ENCODE measurements at regions of chr12 and their contacts with region 1.

Region 1: GRCh38 chr12:116880817-116881324 is 370 bp downstream of the HRK start:
- DNase-seq: peak; percentile 93
- H3K4me3 ChIP-seq: peak overlapping the region; percentile 76
- H3K27ac ChIP-seq: peak overlapping the region; percentile 57
- H3K4me1 ChIP-seq: peaks cover 46% of the 10 kb centered on the region
- CTCF ChIP-seq: peak; percentile 49; the same call in 1 of the 2 replicates

Region 2: DNA sequence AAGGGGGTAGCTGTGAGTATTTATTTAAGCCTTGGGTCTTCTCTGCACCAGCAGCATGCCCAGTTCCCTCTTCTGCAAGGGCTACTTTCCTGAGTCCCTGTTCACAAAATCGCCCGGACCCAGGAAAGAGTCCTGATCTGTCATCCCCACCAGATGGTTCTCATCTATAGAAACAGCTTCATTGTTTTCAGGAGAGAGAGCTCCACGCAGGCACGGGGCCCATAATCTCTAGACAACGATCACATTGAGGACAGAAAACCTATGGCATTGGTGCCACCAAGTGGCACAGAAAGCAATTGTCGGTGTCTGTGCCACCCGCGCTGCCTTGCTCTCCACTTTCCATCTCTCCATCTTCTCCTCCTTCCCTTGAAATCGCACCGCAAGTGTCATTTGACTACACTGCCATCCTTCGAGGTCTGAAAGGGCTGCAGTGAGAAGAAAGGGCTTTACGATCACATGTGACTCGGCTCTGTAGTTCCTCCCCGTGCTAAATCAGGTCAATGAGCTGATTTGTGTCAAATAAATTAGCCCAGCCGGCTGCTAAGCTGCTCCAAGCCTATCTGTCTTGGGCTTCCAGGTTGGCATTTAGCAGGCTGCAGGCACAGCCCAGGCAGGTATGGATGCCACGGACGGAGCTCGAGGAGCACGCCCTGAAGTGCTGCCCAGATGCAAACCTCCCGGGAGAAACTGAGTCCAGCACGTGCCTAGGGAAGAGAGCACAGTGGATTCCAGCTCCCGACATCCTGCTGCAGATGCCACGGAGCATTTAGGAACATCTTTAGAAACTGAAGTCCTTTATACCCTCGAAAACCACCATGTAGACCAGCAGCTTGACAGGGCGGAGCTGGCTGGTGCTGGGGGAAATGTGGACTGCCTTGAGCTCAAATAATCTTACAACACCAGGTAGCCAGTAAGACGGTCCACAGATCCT is 171.8 kb before region 1 on chr12:
- CTCF ChIA-PET with region 1: interaction called, 13 read pairs
- POLR2A ChIA-PET with region 1: interaction called, 4 read pairs
- intact Hi-C with region 1: loop called (anchors 1 kb)
- DNase-seq: peak; percentile 82
- H3K4me3 ChIP-seq: peak overlapping the region; percentile 39
- H3K27ac ChIP-seq: peak overlapping the region; percentile 85
- H3K4me1 ChIP-seq: peaks cover 63% of the 10 kb centered on the region
- CTCF ChIP-seq: peak; percentile 79

Region 3: DNA sequence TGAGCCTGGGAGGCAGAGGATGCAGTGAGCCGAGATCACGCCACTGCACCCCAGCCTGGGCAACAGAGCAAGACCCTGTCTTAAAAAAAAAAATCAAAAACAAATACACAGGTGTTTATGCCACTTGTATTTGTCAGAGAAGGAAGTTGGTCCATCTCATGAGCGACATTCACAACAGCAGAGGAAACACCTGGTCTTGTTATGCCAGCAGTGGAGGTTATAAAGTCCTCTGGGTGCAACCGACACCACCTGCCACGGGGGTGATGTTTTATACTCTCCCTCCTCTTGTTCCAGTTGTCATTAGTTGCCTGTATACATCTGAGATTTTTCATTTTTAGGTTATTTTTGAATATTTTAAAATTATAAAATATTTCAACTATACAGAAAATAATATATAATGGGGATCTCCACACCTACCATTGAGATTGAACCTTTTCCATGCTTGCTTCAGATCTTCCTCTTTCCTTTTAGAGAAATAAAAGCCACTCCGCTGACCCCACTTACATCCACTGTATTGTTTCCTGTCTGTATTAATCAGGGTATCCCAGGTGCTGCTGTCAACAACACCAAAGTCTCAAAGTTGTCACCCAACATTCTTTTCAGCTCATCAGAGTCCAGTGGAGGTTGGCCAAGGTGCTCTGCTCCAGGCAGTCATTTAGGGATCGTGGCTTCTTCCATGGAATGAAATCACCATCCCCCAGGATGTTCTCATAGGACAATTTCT is 77.7 kb before region 1 on chr12:
- CTCF ChIA-PET with region 1: no interaction called
- POLR2A ChIA-PET with region 1: interaction called, 4 read pairs
- intact Hi-C with region 1: loop called (anchors 1 kb)
- DNase-seq: peak; percentile 98
- H3K4me3 ChIP-seq: peak overlapping the region; percentile 55
- H3K27ac ChIP-seq: peak overlapping the region; percentile 100
- H3K4me1 ChIP-seq: peaks cover 76% of the 10 kb centered on the region
- CTCF ChIP-seq: no peak

Region 4: DNA sequence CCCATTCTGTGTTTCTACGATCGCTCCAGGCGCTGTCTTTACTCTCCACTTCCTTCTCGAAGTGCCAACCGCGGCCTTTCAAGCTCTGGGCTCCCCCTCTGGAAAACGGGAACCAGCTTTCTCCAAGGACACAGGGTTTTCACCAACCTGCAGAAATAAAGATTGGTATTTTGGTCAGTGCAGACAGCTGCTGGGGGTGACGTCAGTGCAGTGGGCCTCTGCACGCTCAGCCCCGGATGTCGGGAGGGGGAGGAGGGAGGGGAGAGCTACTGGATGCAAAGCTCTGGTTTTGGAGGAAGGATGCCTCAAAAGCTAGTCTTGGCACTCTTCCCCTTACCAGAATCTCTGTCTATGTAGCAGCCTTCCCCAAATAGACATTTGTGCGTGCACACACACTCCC is 19.6 kb before region 1 on chr12:
- CTCF ChIA-PET with region 1: interaction called, 6 read pairs
- POLR2A ChIA-PET with region 1: interaction called, 9 read pairs
- intact Hi-C with region 1: loop called (anchors 1 kb)
- DNase-seq: peak; percentile 92
- H3K4me3 ChIP-seq: peak overlapping the region; percentile 54
- H3K27ac ChIP-seq: peak overlapping the region; percentile 91
- H3K4me1 ChIP-seq: peaks cover 80% of the 10 kb centered on the region
- CTCF ChIP-seq: no peak

Region 5: DNA sequence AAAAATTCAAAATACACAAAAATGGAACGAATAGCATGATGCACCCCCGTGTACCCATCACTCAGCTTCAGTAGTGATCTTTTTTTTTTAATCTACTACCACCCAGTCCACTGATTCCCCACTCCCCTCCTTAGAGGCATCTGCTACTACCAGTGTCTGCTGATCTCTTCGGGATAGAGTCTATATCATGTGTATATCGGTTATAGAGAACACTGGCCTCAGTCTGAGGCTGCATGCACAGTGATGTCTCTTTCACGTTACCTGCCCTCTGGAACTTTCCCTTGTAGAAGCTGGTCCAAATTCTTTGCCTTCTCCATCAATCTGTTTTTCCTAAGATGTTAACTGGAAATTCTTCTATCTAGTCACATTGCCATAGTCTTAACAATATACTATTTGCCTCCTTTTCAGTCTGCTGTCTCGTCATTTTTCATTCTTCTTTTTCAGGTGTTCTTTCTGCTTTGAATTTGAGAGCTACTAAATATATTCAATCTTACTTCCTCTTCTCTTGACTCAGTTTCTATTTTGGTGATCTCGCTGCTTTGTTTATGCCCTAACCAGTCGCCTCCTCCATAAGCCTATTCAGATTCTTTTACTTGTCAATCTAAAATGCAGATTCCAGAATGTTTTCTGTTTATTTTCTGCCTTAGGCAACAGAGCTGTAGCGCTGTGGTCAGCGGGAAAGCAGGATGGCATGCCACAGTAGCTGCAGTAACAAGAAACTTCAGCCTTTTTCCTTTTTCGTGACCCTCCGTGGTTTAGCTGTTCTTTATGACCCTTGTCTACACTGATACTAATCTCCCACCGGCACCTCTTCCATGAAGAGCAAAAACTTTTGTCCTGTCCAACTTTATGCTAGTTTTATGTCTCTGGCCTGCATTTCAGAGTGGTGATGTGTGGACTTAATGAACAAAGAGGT is 96.9 kb after region 1 on chr12:
- CTCF ChIA-PET with region 1: no interaction called
- POLR2A ChIA-PET with region 1: interaction called, 12 read pairs
- intact Hi-C with region 1: no loop called
- DNase-seq: peak; percentile 77
- H3K4me3 ChIP-seq: peak overlapping the region; percentile 66
- H3K27ac ChIP-seq: peak overlapping the region; percentile 87
- H3K4me1 ChIP-seq: peaks cover 56% of the 10 kb centered on the region
- CTCF ChIP-seq: no peak